Activated CD4-positive, alpha-beta T cell treated with anti-CD3 and anti-CD28 coated beads for 36 hours (primary cell): ENCODE measurements at regions of chr1 and their contacts with region 1.

Region 1: DNA sequence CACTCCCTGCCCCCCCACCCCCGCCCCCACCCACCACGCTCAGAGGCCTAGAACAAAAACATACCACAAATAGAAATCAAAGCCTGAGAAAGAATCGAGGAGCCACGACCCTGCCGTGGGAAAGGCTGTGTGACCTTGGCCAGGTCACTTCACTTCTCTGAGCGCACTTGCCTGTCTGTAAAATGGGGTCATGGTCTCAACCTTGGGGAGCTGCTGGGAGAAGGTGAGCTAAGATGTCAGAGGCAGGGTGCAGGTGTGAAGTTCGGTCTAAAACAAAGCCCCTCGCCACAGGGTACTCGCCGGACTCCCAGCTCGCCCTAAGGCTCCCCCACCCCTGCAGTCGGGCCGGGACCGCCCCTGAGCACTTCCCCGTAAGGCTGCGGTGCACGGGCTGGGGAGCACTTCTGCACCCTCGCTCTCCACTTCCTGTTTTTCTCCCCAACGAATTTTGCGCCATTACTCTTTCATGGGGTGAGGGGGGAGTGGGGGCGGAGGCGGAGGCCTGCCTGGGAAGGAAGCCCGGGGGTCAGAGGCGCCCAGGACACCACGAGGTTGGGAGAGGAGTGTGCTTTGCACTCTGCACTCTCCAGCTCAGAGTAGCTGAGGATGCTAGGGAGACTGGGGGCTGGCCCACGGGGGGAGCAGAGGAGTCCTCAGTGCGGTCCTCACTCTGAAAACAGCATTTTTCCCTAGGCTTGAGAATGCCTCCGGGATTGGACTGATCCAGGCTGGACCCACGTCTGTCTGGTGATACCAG is 21.9 kb upstream of the PIK3CD start:
- DNase-seq: peak; percentile 88
- ATAC-seq: peak; percentile 45
- H3K4me3 Mint-ChIP-seq: peak overlapping the region; percentile 87
- H3K27ac Mint-ChIP-seq: peak overlapping the region; percentile 95
- H3K4me1 Mint-ChIP-seq: peaks cover 64% of the 10 kb centered on the region
- H3K27me3 Mint-ChIP-seq: peaks cover 2% of the 10 kb centered on the region

Region 2: DNA sequence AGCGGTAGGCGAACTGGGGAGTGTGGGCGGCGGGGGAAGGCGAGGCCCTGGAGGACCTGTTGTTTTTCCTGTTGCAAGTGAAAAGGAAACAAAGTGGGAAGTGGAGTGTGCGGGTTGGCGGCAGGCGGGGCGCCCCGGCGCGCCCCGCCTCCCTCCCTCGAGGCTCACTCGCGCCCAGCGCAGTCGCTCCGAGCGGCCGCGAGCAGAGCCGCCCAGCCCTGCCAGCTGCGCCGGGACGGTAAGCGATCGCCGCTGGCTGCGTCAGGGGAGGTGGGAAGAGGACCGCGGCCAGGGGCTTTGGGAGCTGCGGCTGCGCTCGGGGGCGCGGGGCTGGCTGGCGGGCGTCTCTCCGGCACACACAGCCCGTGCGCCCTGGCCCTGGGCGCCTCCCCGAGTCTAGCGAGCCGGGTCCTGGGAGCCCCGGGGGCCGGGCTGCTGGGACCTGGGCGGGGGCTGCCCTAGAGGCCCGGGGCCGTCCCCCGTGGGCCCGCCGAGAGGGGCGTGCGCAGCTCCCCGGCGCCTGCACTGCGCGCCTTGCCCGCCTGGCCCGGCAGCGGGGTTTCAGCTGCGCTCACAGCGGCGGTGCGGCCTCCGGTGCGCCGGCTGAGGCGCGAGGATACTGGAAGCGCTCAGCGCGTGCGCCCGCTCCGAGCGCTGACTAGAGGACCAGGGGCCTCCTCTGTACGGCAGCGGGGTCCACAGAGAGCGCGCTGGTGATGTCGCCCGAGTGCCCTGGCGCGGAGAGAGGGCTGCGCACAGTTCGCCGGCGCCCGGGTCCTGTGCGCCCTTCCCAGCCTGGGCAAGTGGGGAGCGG is 22.1 kb after region 1 on chr1 and contains the start of gene PIK3CD:
- CTCF ChIA-PET with region 1: interaction called, 100 read pairs
- POLR2A ChIA-PET with region 1: interaction called, 49 read pairs
- intact Hi-C with region 1: loop called (anchors 1 kb)
- DNase-seq: peak; percentile 69
- ATAC-seq: peak; percentile 24
- H3K4me3 Mint-ChIP-seq: peak within 1 kb of the TSS; percentile 98
- H3K27ac Mint-ChIP-seq: peak within 1 kb of the TSS; percentile 99
- H3K4me1 Mint-ChIP-seq: peaks cover 51% of the 10 kb centered on the region
- H3K27me3 Mint-ChIP-seq: no peaks in the 10 kb centered on the region
- total RNA-seq, gene PIK3CD: 96.4 to 114 TPM

Region 3: GRCh38 chr1:9689011-9689706 is 59.5 kb after region 1 on chr1:
- CTCF ChIA-PET with region 1: interaction called, 9 read pairs
- POLR2A ChIA-PET with region 1: interaction called, 3 read pairs
- intact Hi-C with region 1: loop called (anchors 1 to 2 kb)
- DNase-seq: peak; percentile 93
- ATAC-seq: peak; percentile 78
- H3K4me3 Mint-ChIP-seq: peak overlapping the region; percentile 70
- H3K27ac Mint-ChIP-seq: peak overlapping the region; percentile 77
- H3K4me1 Mint-ChIP-seq: peaks cover 70% of the 10 kb centered on the region
- H3K27me3 Mint-ChIP-seq: no peaks in the 10 kb centered on the region

Region 4: DNA sequence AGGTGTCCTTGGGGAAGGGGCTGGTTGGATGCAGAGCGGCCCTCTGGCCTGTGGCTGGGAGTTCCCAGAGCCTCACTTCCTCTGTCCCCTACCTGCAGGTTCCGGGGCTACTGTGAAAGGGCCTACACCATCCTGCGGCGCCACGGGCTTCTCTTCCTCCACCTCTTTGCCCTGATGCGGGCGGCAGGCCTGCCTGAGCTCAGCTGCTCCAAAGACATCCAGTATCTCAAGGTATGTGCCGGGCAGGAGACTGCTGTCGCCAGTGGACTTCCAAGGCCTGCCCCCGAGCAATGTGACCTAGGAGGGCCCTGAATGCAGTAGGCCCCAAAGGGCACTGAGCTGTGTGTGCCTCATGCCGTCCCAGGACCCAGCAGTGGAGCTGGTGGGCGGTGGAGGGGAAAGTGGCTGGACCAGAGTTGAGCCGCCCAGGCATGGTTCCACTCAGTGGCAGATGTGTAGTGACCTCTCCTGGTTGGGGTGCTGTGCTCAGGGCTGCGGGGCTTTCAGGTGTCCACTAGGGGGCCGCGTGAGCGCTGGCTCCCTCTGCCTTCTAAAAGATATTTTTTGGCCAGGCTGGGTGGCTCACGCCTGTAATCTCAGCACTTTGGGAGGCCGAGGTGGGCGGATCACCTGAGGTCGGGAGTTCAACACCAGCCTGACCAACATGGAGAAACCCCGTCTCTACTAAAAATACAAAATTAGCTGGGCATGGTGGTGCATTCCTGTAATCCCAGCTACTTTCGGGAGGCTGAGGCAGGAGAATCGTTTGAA is 95.3 kb after region 1 on chr1:
- CTCF ChIA-PET with region 1: interaction called, 20 read pairs
- POLR2A ChIA-PET with region 1: no interaction called
- intact Hi-C with region 1: loop called (anchors 1 kb)
- DNase-seq: peak; percentile 84
- ATAC-seq: peak; percentile 24
- H3K4me3 Mint-ChIP-seq: no peak overlapping the region
- H3K27ac Mint-ChIP-seq: no peak overlapping the region
- H3K4me1 Mint-ChIP-seq: peaks cover 61% of the 10 kb centered on the region
- H3K27me3 Mint-ChIP-seq: no peaks in the 10 kb centered on the region

Region 5: DNA sequence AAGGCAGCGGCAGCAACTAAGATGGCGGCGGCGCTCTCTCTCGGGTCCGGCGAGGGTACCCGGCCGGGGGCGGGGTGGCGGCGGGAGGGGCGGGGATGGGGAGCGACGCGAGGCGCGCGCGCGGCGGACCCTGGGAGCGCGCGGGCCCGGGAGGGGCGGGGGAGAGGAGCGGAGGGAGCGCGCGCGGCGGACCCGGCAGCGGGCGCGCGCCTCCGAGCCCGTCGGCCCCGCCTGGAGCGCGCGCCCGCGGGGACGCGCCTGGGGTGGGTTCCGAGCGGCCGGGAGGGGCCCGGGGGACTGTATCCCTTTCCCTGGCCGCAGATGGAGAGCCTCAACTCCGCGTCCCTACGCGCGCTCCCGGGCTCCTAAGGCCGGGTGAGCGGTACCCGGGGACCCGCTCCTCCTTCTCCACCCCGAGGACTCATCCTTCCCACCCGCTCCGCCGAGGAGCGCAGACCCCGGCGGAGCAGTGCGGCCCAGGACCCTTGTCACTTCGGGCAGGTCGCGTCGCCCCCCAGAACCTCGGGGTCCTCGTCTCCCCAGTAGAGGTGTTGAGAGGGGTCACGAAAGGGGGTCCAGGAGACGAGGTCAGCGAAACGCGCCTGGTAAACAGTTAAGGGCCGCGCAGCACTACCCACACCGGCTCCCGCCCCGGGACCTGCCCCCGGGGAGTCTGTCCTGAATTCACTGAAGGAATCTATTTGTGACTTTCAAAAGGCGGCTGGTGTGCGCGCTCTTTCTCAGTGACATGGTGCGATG is 194.5 kb after region 1 on chr1 and contains the start of gene CLSTN1:
- CTCF ChIA-PET with region 1: interaction called, 3 read pairs
- POLR2A ChIA-PET with region 1: no interaction called
- intact Hi-C with region 1: loop called in 1 of 2 experiments (anchors 1 kb)
- DNase-seq: peak; percentile 96
- ATAC-seq: peak; percentile 72
- H3K4me3 Mint-ChIP-seq: peak within 1 kb of the TSS; percentile 96
- H3K27ac Mint-ChIP-seq: peak within 1 kb of the TSS; percentile 89
- H3K4me1 Mint-ChIP-seq: peaks cover 35% of the 10 kb centered on the region
- H3K27me3 Mint-ChIP-seq: peaks cover 9% of the 10 kb centered on the region
- total RNA-seq, gene CLSTN1: 34.9 to 36.7 TPM